Spleen (tissue), 13 donors: ENCODE measurements at regions of chr10 and their contacts with region 1.

Region 1: GRCh38 chr10:117496616-117497028 is 45.9 kb upstream of the EMX2 start:
- DNase-seq: peak; percentile 92
- H3K4me3 ChIP-seq: no peak overlapping the region
- H3K27ac ChIP-seq: no peak overlapping the region
- H3K4me1 ChIP-seq: peaks cover 0 to 7% (median 5%) of the 10 kb centered on the region in 6 donors
- H3K27me3 ChIP-seq: peaks cover 0 to 70% (median 14%) of the 10 kb centered on the region in 7 donors
- CTCF ChIP-seq: peak; percentile 80 to 96 (median 92)
- POLR2A ChIP-seq: no peak

Region 2: DNA sequence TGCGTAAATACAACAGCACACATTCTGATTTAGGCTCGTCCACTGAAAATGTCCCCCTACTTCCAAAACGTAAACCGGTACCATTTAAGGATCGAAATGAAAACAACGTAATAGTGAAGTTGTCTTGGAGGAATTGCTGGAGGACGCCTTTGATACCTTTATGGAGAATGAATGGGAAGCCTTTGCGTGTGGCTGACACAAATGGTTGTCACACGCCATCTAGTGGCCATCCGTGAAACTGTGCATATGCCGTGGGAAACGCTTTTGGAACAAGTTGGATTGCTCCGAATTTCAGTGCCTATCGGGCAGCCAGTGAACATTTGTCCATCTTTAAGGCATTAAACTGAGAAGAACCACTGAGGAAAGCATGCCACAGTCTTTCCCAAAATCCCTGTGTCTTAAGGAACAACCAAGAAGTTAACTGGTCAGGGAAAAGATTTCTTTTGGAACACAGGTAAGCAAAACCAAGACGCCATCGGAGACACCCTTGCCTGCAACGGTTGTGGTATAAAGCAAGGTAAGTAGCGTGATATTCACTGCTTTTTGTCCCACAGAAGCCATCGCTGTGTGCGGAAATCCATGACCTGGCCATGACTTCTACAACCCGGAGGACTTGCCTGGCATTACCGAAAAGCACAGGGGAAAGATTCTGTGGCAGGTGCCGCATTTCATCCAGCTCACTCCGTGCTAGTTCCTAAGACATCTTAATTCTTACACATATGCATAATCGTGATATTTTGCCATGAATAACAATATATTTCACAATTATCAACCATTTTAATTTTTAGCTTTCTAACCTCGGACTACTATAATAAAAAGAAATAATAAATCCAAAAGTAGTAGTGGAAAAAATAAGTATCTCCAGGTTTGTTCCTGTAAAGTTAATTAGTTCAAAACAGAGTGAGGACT is 744.9 kb after region 1 on chr10:
- intact Hi-C with region 1: loop called (anchors 2 kb)
- DNase-seq: peak; percentile 80
- H3K4me3 ChIP-seq: no peak overlapping the region
- H3K27ac ChIP-seq: no peak overlapping the region
- H3K4me1 ChIP-seq: peaks cover 0 to 5% (median 0%) of the 10 kb centered on the region in 6 donors
- H3K27me3 ChIP-seq: peaks cover 3 to 90% (median 46%) of the 10 kb centered on the region in 7 donors
- CTCF ChIP-seq: peak; percentile 57 to 92 (median 84)
- POLR2A ChIP-seq: no peak

Region 3: GRCh38 chr10:118423800-118424479 is 927.3 kb after region 1 on chr10:
- intact Hi-C with region 1: loop called (anchors 5 kb)
- DNase-seq: peak; percentile 80
- H3K4me3 ChIP-seq: no peak overlapping the region
- H3K27ac ChIP-seq: no peak overlapping the region
- H3K4me1 ChIP-seq: no peaks in the 10 kb centered on the region
- H3K27me3 ChIP-seq: peaks cover 0 to 24% (median 0%) of the 10 kb centered on the region in 7 donors
- CTCF ChIP-seq: peak; percentile 17 to 75 (median 46)
- POLR2A ChIP-seq: no peak